GM13976 (cell line): ENCODE measurements at regions of chr1 and their contacts with region 1.

Region 1: GRCh38 chr1:117512743-117513321 is 93.0 kb upstream of the TENT5C start:
- DNase-seq: no peak
- CTCF ChIP-seq: peak; percentile 32

Region 2: DNA sequence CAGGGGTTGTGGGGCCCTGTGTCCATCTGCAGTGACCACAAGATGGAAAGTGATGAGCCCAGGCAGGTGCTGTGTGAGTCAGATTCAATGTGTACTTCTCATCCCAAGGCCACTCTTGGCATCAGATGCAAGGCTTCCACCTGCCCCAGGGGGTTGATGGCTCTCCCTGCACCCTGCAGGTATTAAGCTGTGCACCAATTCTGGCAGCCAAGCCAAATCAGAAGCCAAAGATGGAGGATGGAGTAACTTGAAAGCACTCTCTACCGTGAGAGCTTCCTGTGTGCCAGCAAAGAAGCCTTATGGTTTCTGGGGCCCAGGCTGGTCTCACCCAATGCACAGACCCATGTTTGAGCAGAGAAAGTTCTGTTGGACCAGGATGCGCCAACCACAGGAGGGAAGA is 48.7 kb after region 1 on chr1:
- in situ Hi-C with region 1: no loop called
- DNase-seq: no peak
- CTCF ChIP-seq: no peak

Region 3: GRCh38 chr1:117802531-117803257 is 289.9 kb after region 1 on chr1:
- in situ Hi-C with region 1: no loop called
- DNase-seq: no peak
- CTCF ChIP-seq: no peak

Region 4: DNA sequence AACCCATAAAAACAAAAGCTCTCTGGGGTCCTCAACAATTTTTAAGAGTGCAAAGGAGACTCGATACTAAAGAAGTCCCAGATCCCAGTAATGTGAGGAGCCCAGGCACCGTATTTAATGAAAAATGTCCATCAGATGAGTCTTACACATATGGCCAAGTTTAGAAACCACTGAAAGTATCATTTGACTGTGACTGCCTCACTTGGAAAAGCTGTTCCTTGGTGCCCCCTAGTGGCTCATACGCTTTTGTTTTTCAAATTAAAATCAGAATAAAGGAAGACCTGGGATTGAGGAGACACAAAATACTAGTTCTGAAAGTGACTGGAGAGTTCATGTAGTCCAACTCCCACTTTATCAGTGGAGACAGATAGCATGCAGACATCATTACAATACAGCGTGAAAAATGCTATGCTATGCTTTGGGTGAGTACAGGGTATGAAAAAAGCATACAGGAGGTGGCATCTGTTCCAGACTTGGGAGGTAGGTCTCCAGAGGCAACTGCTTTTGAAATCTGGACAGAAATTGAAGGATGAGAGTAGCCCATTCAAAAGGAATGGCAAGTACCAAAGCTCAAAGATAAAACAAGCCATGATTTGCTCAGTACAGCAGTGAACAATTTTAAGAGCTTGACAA is 382.8 kb after region 1 on chr1:
- in situ Hi-C with region 1: loop called (anchors 25 kb)
- DNase-seq: peak; percentile 51
- CTCF ChIP-seq: peak; percentile 76